Dorsolateral prefrontal cortex (tissue), 120 donors: ENCODE measurements at regions of chr4 and their contacts with region 1.

Region 1: DNA sequence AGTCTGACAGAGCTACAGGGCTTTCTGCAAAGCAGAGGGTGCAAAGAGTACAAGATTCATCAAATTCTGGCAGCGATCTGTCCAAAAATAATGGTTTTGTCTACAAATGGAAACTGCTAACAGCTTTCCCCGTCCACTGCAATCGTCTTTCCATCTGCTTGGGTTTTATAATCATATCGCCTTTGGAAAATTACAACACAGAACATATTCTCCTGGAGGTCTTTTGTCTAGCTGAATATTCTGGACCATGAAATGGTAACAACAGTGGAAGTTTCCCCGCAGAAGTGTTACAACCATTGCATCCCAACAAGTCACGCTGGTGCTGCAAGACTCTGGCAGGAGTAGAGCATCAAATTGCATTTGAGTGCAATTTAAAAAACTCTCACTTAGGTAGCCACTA is 101.2 kb upstream of the BOD1L1 start:
- DNase-seq: peak in 1 of 10 donors; percentile 18
- H3K4me3 ChIP-seq: no peak overlapping the region
- H3K27ac ChIP-seq: peak overlapping the region in 17 of 59 donors; percentile 11 to 74 (median 46)
- H3K27me3 ChIP-seq: no peaks in the 10 kb centered on the region
- CTCF ChIP-seq: no peak

Region 2: GRCh38 chr4:13766761-13767540 is 38.2 kb after region 1 on chr4:
- intact Hi-C with region 1: loop called (anchors 2 kb)
- DNase-seq: peak in 6 of 10 donors; percentile 17 to 69 (median 62)
- H3K4me3 ChIP-seq: no peak overlapping the region
- H3K27ac ChIP-seq: peak overlapping the region in 1 of 59 donors; percentile 36
- H3K27me3 ChIP-seq: no peaks in the 10 kb centered on the region
- CTCF ChIP-seq: no peak